Activated CD8-positive, alpha-beta T cell treated with anti-CD3 and anti-CD28 coated beads for 36 hours (primary cell): ENCODE measurements at regions of chr17 and their contacts with region 1.

Region 1: DNA sequence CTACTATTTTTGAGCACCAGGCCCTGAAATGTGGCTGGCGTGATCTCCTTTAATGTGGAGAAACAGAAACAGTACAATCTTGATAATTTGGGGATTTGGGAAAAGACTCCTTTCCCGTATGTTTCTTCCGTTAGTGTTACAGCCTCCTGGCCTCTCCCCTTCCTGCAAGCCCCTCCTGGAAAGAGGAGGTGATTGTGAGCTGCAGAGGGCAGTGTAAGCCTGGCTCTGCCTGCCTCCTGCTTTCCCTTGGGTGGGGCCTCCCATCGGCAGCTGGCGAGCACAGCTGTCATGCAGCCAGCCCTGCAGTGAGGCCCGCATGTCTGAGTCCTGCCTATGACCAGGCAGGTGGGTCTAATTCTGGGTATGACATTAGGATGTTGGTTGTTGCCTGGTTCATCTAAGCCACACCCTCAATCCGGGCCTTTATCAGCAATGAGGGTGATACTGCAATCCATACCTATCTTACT is 48.7 kb upstream of the WSB1 start:
- DNase-seq: peak; percentile 76
- ATAC-seq: peak; percentile 94
- H3K4me3 Mint-ChIP-seq: no peak overlapping the region
- H3K27ac Mint-ChIP-seq: no peak overlapping the region
- H3K4me1 Mint-ChIP-seq: peaks cover 11% of the 10 kb centered on the region
- H3K27me3 Mint-ChIP-seq: peaks cover 10% of the 10 kb centered on the region
- CTCF ChIP-seq: peak; percentile 65

Region 2: GRCh38 chr17:27226615-27227230 is 18.5 kb before region 1 on chr17:
- CTCF ChIA-PET with region 1: no interaction called
- POLR2A ChIA-PET with region 1: no interaction called
- intact Hi-C with region 1: no loop called
- DNase-seq: no peak
- ATAC-seq: no peak
- H3K4me3 Mint-ChIP-seq: no peak overlapping the region
- H3K27ac Mint-ChIP-seq: no peak overlapping the region
- H3K4me1 Mint-ChIP-seq: no peaks in the 10 kb centered on the region
- H3K27me3 Mint-ChIP-seq: no peaks in the 10 kb centered on the region
- CTCF ChIP-seq: no peak

Region 3: GRCh38 chr17:27332485-27333409 is 87.5 kb after region 1 on chr17:
- CTCF ChIA-PET with region 1: interaction called, 22 read pairs
- POLR2A ChIA-PET with region 1: interaction called, 3 read pairs
- intact Hi-C with region 1: loop called (anchors 2 kb)
- DNase-seq: peak; percentile 97
- ATAC-seq: peak; percentile 88
- H3K4me3 Mint-ChIP-seq: peak overlapping the region; percentile 81
- H3K27ac Mint-ChIP-seq: peak overlapping the region; percentile 94
- H3K4me1 Mint-ChIP-seq: peaks cover 25% of the 10 kb centered on the region
- H3K27me3 Mint-ChIP-seq: no peaks in the 10 kb centered on the region
- CTCF ChIP-seq: peak; percentile 86

Region 4: DNA sequence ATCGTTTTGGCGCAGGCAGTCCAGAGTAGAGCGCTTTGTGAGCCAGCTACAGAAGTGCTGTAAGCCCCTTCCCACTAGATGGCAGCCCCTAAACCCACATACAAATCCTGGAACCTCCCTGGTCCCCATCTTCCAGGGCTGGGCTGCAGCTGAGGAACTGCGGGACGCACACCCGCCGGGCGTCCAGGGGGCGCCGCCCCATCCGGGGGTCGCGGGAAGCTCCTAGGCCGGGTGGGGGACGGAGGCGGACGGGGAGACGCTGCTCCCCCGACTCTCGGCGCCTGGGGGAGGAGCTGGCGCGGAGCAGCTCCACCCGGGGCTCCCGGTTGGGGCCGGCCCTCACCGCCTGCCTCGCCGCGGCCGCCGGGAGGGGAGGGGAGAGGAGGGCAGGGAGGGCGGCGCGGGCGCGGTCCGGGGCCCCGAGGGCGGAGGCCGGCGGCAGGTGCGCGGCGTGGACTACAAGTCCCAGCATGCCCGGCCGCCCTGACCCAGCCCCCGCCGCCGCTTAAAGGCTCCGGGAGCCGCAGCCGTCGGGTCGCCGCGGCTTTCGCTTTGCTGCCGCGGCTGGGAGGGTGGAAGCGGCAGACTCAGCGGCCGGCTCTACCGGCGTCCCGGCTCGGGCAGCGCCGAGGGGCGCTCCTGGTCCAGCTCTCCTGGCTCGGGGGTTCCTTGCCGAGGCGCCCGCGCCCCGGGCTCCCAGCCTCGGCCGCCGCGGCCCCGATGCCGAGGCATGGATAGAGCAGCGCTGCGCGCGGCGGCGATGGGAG is 210.8 kb after region 1 on chr17 and contains the start of gene KSR1:
- CTCF ChIA-PET with region 1: no interaction called
- POLR2A ChIA-PET with region 1: no interaction called
- intact Hi-C with region 1: no loop called
- DNase-seq: peak; percentile 88
- ATAC-seq: peak; percentile 93
- H3K4me3 Mint-ChIP-seq: peak within 1 kb of the TSS; percentile 94
- H3K27ac Mint-ChIP-seq: peak within 1 kb of the TSS; percentile 85
- H3K4me1 Mint-ChIP-seq: peaks cover 38% of the 10 kb centered on the region
- H3K27me3 Mint-ChIP-seq: peaks cover 3% of the 10 kb centered on the region
- CTCF ChIP-seq: peak; percentile 24
- total RNA-seq, gene KSR1: 53.9 to 58.2 TPM